Posterior cingulate gyrus (tissue), 11 donors: ENCODE measurements at regions of chrX and their contacts with region 1.

Region 1: DNA sequence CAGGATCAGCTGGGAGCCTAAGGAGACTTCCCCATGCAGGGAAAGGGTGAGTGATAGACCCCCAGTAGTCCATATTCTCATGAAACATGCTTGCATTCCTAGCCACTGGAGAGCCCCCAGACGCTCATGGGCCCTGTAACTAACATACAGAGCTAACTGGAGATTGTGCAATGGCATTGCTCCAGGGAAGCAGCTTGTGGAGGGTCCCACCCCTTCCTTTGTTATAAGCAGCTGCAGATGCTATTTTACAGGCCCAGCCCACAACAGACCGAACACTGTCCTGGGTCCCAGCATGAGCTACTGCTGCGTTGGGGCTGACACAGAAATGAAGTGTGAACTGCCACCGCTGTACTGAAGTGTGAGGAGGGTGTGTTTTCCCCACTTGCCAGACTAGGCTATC is 1465.7 kb upstream of the DIAPH2 start:
- DNase-seq: no peak

Region 2: GRCh38 chrX:95156566-95156965 is 62.4 kb before region 1 on chrX:
- intact Hi-C with region 1: loop called (anchors 10 kb)
- DNase-seq: no peak

Region 3: GRCh38 chrX:95332530-95332929 is 113.6 kb after region 1 on chrX:
- intact Hi-C with region 1: no loop called
- DNase-seq: no peak